IMR-90 (cell line): ENCODE measurements at regions of chrX and their contacts with region 1.

Region 1: GRCh38 chrX:20080277-20080676 is 36.4 kb downstream of the MAP7D2 start:
- DNase-seq: no peak
- ATAC-seq: no peak
- H3K4me3 ChIP-seq: no peak overlapping the region
- H3K27ac ChIP-seq: no peak overlapping the region
- H3K4me1 ChIP-seq: no peaks in the 10 kb centered on the region
- H3K27me3 ChIP-seq: peaks cover 24% of the 10 kb centered on the region
- CTCF ChIP-seq: no peak
- POLR2A ChIP-seq: no peak
- RAD21 ChIP-seq: no peak

Region 2: DNA sequence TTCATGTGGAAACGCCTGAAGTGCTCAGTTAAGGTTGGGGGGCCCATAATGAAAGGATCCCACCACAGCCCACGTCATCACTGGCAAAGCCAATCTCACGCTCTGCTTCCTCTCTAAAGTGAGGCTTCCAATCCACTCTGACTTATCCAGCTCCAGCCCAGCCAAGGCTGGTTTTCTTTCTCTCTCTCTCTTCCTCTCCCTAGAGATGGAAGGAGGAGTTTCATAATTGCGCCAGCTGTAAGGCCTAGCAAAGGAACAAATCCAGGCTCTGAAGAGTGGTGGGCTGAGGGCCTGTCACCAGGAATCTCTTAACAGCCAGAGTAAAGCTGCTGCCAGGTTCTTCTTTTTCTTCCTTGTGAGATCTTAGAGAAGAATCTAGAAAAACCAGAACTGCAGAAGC is 68.7 kb before region 1 on chrX:
- CTCF ChIA-PET with region 1: no interaction called
- POLR2A ChIA-PET with region 1: interaction called, 12 read pairs
- dilution Hi-C with region 1: no loop called
- in situ Hi-C with region 1: no loop called
- intact Hi-C with region 1: no loop called
- DNase-seq: no peak
- ATAC-seq: no peak
- H3K4me3 ChIP-seq: no peak overlapping the region
- H3K27ac ChIP-seq: no peak overlapping the region
- H3K4me1 ChIP-seq: no peaks in the 10 kb centered on the region
- H3K27me3 ChIP-seq: peaks cover 16% of the 10 kb centered on the region
- CTCF ChIP-seq: no peak
- POLR2A ChIP-seq: no peak
- RAD21 ChIP-seq: no peak

Region 3: GRCh38 chrX:20060961-20061748 is 19.1 kb before region 1 on chrX:
- CTCF ChIA-PET with region 1: no interaction called
- POLR2A ChIA-PET with region 1: no interaction called
- dilution Hi-C with region 1: no loop called
- in situ Hi-C with region 1: no loop called
- intact Hi-C with region 1: no loop called
- DNase-seq: no peak
- ATAC-seq: no peak
- H3K4me3 ChIP-seq: no peak overlapping the region
- H3K27ac ChIP-seq: no peak overlapping the region
- H3K4me1 ChIP-seq: peaks cover 2% of the 10 kb centered on the region; the same call in 1 of the 2 replicates
- H3K27me3 ChIP-seq: peaks cover 15% of the 10 kb centered on the region
- CTCF ChIP-seq: no peak
- POLR2A ChIP-seq: no peak
- RAD21 ChIP-seq: no peak

Region 4: DNA sequence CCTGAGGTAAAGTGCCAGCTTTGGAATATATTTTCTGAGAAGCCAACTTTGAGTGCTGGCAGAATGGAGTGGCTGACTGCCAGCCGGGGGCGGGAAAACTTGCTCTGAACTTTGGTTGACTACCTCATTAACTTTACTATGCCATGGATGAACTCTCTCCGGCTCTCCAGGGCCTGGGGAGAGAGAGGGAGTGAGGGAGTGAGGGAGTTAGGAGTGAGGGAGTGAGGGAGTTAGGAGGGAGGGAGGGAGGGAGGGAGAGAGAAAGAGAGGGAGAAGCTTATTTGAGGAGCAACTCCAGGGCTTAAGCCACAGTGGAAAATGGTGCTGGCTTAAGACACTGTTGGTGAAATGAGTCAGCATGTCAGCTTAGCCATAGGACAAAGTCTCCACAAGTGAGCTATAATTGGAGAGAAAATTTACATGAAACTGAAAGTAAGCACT is 467.4 kb after region 1 on chrX:
- CTCF ChIA-PET with region 1: no interaction called
- POLR2A ChIA-PET with region 1: no interaction called
- dilution Hi-C with region 1: no loop called
- in situ Hi-C with region 1: no loop called
- intact Hi-C with region 1: no loop called
- DNase-seq: peak; percentile 68
- ATAC-seq: peak; percentile 83
- H3K4me3 ChIP-seq: no peak overlapping the region
- H3K27ac ChIP-seq: peak overlapping the region; percentile 9; the same call in 1 of the 2 replicates
- H3K4me1 ChIP-seq: no peaks in the 10 kb centered on the region
- H3K27me3 ChIP-seq: no peaks in the 10 kb centered on the region
- CTCF ChIP-seq: no peak
- POLR2A ChIP-seq: no peak
- RAD21 ChIP-seq: no peak